A549 (cell line): ENCODE measurements at regions of chr15 and their contacts with region 1.

Region 1: GRCh38 chr15:70754862-70755261 is 8.5 kb downstream of the UACA start:
- DNase-seq: no peak
- ATAC-seq: no peak
- H3K4me3 ChIP-seq: no peak overlapping the region
- H3K27ac ChIP-seq: no peak overlapping the region
- H3K4me1 ChIP-seq: peaks cover 35% of the 10 kb centered on the region
- CTCF ChIP-seq: peak; percentile 29; the same call in 2 of the 3 replicates
- EP300 ChIP-seq: no peak
- POLR2A ChIP-seq: no peak
- RAD21 ChIP-seq: peak; percentile 36 to 49; a peak in 4 of 5 replicates

Region 2: DNA sequence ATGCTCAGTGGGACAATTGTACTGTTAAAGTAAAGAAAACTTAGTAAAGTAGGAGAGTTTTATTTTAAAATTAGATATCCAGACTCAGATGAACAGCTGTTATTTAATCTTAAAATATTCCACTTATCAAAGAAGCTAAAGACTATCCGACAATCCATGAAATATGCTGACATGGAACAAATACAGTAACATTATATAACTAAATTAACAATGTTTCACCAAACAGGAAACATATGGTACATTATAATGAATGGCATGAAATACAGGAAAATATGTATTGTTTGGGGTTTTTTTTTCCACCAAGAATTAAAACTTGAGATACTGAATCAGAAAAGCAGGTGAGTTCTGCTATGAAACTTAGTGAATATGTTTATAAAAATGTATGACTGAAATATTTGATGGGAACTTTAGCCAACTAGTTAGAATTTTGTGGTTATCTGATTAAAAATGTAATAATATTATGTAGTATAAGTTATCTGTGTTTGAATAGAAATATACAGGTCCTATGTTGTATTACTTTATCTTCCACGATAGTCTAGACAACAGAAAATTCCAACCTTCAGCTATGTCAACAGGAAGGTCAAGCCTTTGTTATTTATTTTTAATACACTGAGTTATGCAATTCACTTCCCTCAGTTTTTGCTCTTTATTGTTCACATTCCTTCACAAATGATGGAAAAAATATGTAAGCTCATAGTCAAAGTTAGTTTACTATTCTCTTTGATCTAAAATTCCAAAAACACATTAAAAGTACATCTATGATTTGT is 64.2 kb before region 1 on chr15:
- CTCF ChIA-PET with region 1: no interaction called
- POLR2A ChIA-PET with region 1: no interaction called
- DNase-seq: peak in 1 of 2 experiments; percentile 26
- ATAC-seq: no peak
- H3K4me3 ChIP-seq: no peak overlapping the region; the same call in 2 of the 3 replicates
- H3K27ac ChIP-seq: peak overlapping the region; percentile 3 to 11; a peak in 1 of 6 replicates
- H3K4me1 ChIP-seq: peaks cover 38% of the 10 kb centered on the region
- CTCF ChIP-seq: no peak
- EP300 ChIP-seq: no peak
- POLR2A ChIP-seq: no peak
- RAD21 ChIP-seq: no peak

Region 3: DNA sequence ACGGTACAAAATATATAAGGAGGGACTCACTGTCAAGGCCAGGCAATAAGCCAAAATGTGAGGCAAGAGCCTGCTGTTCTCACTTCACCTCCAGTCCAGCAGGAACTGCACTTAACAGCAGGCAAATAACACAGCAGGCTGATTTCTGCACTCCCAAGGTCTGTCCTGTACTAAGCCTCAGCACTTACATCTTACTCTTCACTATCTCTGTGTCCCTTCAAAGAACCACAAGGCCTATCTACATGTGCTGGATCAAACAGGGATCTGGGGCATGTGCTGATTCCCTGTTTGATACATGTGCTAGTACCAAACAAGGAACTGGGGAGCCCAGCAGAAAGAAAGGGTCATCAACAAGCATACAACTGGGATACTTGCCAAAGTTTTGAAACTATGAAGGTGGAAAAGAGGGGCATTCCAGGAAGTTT is 13.7 kb before region 1 on chr15:
- CTCF ChIA-PET with region 1: interaction called, 18 read pairs
- POLR2A ChIA-PET with region 1: interaction called, 7 read pairs
- DNase-seq: peak; percentile 55 to 76
- ATAC-seq: peak; percentile 81 to 83
- H3K4me3 ChIP-seq: no peak overlapping the region
- H3K27ac ChIP-seq: peak overlapping the region; percentile 63 to 80
- H3K4me1 ChIP-seq: peaks cover 42% of the 10 kb centered on the region
- CTCF ChIP-seq: no peak
- EP300 ChIP-seq: no peak
- POLR2A ChIP-seq: no peak
- RAD21 ChIP-seq: no peak

Region 4: GRCh38 chr15:70775160-70775559 is 20.3 kb after region 1 on chr15:
- CTCF ChIA-PET with region 1: interaction called, 16 read pairs
- POLR2A ChIA-PET with region 1: no interaction called
- DNase-seq: peak; percentile 36 to 53
- ATAC-seq: peak in 1 of 2 experiments; percentile 54; a peak in 3 of 6 replicates
- H3K4me3 ChIP-seq: no peak overlapping the region
- H3K27ac ChIP-seq: peak overlapping the region; percentile 2 to 55; a peak in 2 of 6 replicates
- H3K4me1 ChIP-seq: peaks cover 42% of the 10 kb centered on the region
- CTCF ChIP-seq: no peak
- EP300 ChIP-seq: no peak
- POLR2A ChIP-seq: no peak
- RAD21 ChIP-seq: no peak

Region 5: GRCh38 chr15:70936326-70936725 is 181.5 kb after region 1 on chr15:
- CTCF ChIA-PET with region 1: no interaction called
- POLR2A ChIA-PET with region 1: no interaction called
- DNase-seq: no peak
- ATAC-seq: no peak
- H3K4me3 ChIP-seq: no peak overlapping the region
- H3K27ac ChIP-seq: no peak overlapping the region
- H3K4me1 ChIP-seq: no peaks in the 10 kb centered on the region
- CTCF ChIP-seq: no peak
- EP300 ChIP-seq: no peak
- POLR2A ChIP-seq: no peak
- RAD21 ChIP-seq: no peak